ENCODE measurements at regions of chr14 and their contacts with region 1.

Region 1: DNA sequence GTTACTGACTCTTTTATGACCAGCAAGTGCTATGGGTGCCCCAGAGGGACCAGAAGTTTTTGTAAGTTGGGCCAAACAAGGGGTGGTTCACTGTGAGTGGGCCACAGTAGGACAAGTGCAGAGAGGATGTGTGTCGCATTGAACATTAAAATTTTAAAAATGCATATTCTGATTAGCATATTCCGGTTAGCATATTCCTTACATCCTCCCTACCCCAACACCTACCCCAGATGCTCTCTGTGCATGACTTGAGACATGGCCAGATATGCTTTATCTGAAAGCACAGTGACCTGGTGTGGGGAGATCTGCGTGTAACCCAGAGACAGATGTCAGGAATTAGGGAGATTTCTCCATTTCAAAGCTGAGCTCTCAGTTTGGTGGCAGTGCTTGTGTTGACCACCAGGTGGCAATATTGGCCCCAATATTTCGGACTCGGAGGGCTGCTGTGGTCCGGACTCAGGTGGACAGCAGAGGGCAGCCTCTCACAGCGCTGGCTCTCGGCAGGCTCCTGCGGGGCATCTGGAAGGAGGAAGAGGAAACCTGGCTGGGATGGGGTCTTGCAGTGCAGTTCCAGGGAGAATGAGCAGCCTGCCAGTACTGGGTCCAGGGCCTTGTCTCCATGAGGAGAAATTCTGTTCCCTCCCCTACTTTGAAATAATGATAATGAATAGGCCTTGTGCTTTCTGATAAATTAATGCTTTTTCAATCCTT is 1.6 kb upstream of the CEBPE start:
- DNase-seq: peak; percentile 85
- H3K4me3 Mint-ChIP-seq: peak overlapping the region; percentile 36
- H3K27ac Mint-ChIP-seq: peak overlapping the region; percentile 83
- H3K4me1 Mint-ChIP-seq: peaks cover 34% of the 10 kb centered on the region
- H3K27me3 Mint-ChIP-seq: peaks cover 1% of the 10 kb centered on the region

Region 2: DNA sequence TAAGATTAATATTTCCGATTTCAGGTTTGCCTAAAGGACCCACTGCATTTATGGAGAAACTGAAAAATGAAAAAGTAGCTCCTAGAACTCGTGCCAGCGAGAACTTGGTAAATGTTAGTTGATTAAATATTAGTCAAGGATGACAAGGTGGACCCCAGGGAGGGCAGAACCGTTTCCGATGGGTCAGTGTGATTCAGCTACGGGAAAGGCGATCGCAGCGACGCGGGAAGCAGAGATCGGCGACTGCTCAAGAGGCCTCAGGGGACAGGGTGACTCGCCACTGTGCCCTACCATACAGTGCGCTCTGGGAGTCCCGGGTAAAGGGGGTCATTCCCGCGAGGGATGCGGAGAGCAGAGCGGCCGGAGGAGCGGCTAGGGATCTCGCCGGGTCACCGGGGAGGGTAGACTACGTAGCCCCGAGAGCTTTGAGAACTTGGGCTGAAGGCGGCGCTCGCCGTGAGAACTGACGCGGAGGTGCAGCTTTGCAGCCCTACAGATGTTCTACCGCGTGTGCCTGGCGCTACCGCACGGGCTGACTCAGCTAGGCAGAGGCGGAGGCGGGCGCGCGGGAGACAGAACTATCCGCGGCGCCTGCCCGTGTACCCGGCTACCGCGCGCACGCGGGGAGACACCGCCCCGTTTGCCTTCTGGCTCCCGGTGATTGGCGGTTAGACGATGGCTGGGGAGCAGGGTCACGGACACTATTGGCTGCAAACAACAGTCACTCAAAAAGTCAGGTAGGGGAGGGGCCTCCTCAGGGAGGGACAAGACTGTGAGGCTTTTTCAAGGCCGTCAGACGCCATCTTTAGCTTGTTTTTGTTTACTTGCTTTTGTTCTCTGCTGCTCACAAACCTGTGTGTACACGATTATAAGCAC is 113.9 kb before region 1 on chr14:
- CTCF ChIA-PET with region 1: no interaction called
- POLR2A ChIA-PET with region 1: no interaction called
- DNase-seq: peak; percentile 98
- H3K4me3 Mint-ChIP-seq: peak overlapping the region; percentile 93
- H3K27ac Mint-ChIP-seq: peak overlapping the region; percentile 94
- H3K4me1 Mint-ChIP-seq: peaks cover 51% of the 10 kb centered on the region
- H3K27me3 Mint-ChIP-seq: no peaks in the 10 kb centered on the region

Region 3: GRCh38 chr14:23095196-23096108 is 25.2 kb before region 1 on chr14 and contains the start of gene C14orf119:
- CTCF ChIA-PET with region 1: interaction called, 38 read pairs
- POLR2A ChIA-PET with region 1: interaction called, 6 read pairs
- DNase-seq: peak; percentile 100
- H3K4me3 Mint-ChIP-seq: no peak within 1 kb of the TSS
- H3K27ac Mint-ChIP-seq: no peak within 1 kb of the TSS
- H3K4me1 Mint-ChIP-seq: peaks cover 36% of the 10 kb centered on the region
- H3K27me3 Mint-ChIP-seq: no peaks in the 10 kb centered on the region
- total RNA-seq, gene C14orf119: 49.2 to 55.5 TPM

Region 4: GRCh38 chr14:23141671-23142451 is 21.2 kb after region 1 on chr14:
- CTCF ChIA-PET with region 1: interaction called, 10 read pairs
- POLR2A ChIA-PET with region 1: interaction called, 3 read pairs
- DNase-seq: no peak
- H3K4me3 Mint-ChIP-seq: no peak overlapping the region
- H3K27ac Mint-ChIP-seq: no peak overlapping the region
- H3K4me1 Mint-ChIP-seq: peaks cover 4% of the 10 kb centered on the region
- H3K27me3 Mint-ChIP-seq: peaks cover 4% of the 10 kb centered on the region

Region 5: DNA sequence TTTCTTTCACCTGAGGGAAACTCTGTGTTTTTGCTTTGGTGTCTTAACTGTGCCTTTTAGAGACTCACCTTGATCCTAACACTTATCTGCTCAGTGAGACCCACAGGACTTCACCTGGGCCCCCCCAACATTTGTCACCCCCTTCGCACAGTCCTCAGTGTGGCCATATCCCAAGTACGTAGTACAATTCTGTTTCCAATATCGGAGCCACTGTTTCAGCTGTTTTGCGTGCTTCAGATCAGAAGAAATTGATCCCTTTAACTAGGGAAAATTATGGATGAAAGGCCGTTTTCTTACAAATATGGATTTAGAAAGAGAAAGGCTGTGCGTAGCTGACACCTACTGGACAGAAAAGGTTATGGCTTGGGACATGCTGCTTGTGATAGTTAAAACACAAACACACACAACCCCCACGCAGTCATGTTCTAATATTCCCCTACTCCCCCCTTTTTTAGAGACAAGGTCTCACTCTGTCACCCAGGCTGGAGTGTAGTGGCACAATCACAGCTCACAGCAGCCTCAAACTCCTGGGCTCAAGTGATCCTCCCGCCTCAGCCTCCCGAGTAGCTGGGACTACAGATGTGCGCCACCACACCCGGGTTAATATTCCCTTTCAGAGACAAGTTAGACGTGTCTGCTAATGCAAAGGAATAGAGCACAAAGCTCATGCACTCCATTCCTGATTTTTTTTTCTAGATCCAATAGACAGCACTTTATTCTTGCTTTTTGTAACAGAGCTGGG is 66.4 kb after region 1 on chr14:
- CTCF ChIA-PET with region 1: interaction called, 214 read pairs
- POLR2A ChIA-PET with region 1: interaction called, 6 read pairs
- DNase-seq: peak; percentile 22
- H3K4me3 Mint-ChIP-seq: no peak overlapping the region
- H3K27ac Mint-ChIP-seq: no peak overlapping the region
- H3K4me1 Mint-ChIP-seq: peaks cover 2% of the 10 kb centered on the region
- H3K27me3 Mint-ChIP-seq: peaks cover 17% of the 10 kb centered on the region

Region 6: DNA sequence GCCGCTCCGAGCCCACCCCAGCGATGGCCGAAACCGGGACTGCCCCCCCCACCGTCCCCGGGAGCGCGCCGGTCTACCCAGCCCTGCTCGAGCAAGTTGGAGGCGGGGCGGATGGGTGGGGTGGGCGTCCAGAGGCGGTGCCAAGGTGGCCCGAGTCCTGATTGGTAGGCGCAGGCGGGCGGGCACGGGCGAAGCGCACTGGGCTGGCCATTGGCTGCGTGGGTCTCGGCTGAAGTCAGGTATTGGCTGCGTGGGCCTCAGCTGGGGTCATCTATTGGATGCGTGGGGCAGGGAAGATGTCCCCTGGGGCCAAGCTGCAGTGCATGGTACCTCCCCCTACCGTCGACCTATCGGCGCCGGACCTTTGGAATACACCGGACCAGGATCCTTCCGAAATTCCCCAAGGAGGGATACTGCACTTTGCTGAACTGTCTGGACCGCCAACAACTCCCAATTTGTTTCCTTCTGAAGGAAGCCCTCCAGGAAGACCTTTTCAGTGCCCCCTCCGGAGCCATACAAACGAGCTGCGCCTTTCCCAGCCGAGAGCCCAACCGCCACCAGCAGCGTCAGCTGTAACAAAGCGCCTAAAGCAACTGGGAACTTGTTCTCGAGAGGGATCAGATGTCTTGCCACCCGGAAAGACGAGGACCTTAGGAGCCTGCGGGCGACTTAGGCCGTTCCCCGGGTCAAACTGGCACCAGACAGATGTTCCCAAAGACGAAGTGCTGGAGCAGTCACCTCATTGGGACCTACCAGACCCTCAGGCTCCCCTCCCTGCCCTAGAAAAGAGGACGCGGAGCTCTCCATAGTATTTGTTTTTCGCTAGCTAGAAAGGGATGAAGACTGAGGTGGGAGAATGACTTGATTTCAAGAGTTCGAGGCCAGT is 165.6 kb after region 1 on chr14 and contains the start of gene HOMEZ:
- CTCF ChIA-PET with region 1: interaction called, 27 read pairs
- POLR2A ChIA-PET with region 1: no interaction called
- DNase-seq: peak; percentile 98
- H3K4me3 Mint-ChIP-seq: peak within 1 kb of the TSS; percentile 89
- H3K27ac Mint-ChIP-seq: peak within 1 kb of the TSS; percentile 84
- H3K4me1 Mint-ChIP-seq: peaks cover 28% of the 10 kb centered on the region
- H3K27me3 Mint-ChIP-seq: no peaks in the 10 kb centered on the region
- total RNA-seq, gene HOMEZ: 11.7 to 11.9 TPM

Region 7: DNA sequence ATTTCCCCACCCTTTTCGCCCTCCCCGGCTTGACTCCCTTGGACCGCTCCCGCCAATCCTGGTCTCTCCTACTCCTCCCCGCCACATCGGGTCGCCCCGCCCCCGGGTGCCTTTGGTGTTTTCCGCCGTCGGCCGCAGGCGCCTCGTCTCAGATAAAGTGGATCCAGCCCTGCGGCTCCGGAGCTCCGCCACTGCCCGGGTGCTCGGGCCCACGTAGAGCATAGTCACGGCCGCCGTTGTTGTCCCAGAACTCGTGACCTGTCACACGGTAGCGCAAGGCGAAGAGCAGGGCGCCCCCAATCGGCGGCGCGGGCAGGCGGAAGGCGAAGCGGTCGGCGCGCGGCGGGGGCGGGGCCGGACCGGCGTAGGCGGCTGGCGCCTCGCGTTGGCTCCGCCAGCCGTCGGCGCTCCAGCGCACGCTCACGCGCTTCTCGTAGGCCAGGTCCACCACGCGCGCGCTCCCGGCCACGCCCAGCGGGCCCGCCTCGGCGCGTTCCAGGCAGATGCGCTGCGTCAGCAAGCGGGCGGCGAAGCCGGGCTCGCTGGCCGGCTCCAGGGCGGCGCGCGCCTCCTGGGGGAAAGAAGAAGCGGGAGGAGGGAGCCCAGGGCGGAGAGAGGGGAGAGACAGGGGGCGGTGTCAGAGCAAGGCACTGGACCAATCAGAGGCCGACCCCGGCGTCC is 180.7 kb after region 1 on chr14:
- CTCF ChIA-PET with region 1: interaction called, 27 read pairs
- POLR2A ChIA-PET with region 1: interaction called, 17 read pairs
- DNase-seq: peak; percentile 98
- H3K4me3 Mint-ChIP-seq: peak overlapping the region; percentile 93
- H3K27ac Mint-ChIP-seq: peak overlapping the region; percentile 95
- H3K4me1 Mint-ChIP-seq: peaks cover 31% of the 10 kb centered on the region
- H3K27me3 Mint-ChIP-seq: peaks cover 8% of the 10 kb centered on the region

Region 8: DNA sequence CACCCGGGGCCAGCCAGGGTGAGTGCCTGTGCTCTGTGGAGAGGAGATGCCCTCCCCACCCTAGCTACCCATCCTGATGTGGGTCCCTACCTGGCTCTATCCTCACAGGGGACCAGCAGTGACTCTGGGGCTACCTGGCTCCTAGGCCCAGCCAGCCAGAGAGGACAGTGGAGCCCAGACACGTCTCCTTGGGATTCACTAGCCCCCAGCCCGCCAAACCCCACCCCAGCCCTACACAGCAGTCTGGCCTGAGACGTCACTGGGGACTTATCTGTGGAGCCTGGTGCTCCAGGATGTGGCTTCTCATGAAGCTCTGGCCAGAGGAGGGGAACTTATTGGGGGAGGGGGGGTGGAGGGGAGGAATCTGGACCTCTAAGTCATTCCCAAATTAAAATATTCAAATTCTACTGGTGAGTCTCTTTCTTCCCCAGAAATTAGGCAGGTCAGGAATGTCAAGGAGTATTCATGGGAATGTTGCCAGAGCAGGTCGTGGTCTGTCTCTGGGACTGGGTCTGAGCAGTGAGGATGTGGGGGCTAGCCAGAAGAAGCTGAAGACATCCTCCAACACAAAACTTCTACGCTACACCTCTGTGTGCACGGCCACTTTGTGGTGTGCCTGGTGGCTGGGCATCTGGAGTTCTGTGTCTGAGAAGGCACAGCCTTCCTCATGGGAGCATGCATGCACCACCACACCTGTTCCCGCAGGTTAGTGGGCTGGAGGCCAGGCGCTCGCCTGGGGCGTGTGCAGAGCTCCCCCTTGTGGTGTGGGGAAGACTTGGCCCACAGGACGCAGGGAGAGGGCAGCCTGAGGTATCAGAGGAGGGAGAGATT is 258.9 kb after region 1 on chr14:
- CTCF ChIA-PET with region 1: interaction called, 27 read pairs
- POLR2A ChIA-PET with region 1: no interaction called
- DNase-seq: peak; percentile 63
- H3K4me3 Mint-ChIP-seq: no peak overlapping the region
- H3K27ac Mint-ChIP-seq: no peak overlapping the region
- H3K4me1 Mint-ChIP-seq: no peaks in the 10 kb centered on the region
- H3K27me3 Mint-ChIP-seq: peaks cover 3% of the 10 kb centered on the region

Measured in activated CD4-positive, alpha-beta memory T cell treated with anti-CD3 and anti-CD28 coated beads, Interleukin-2, amount 10 ng/mL, durations not matched to agents 7 days and 5 days (primary cell).